H1 (cell line): ENCODE measurements at regions of chr12 and their contacts with region 1.

Region 1: GRCh38 chr12:2812290-2813213 is at the start of gene ITFG2:
- DNase-seq: peak; percentile 96
- H3K4me3 ChIP-seq: peak within 1 kb of the TSS; percentile 52 to 94 (median 72)
- H3K27ac ChIP-seq: peak within 1 kb of the TSS; percentile 97
- H3K4me1 ChIP-seq: peaks cover 0 to 3% (median 0%) of the 10 kb centered on the region in 4 experiments; a peak in 3 of 7 replicates
- H3K27me3 ChIP-seq: no peaks in the 10 kb centered on the region
- CTCF ChIP-seq: no peak
- EP300 ChIP-seq: peak in 1 of 2 experiments; percentile 37; a peak in 1 of 3 replicates
- POLR2A ChIP-seq: peak; percentile 91 to 99
- RAD21 ChIP-seq: no peak
- total RNA-seq, gene ITFG2: 22.9 and 23.0 TPM in 2 replicates

Region 2: DNA sequence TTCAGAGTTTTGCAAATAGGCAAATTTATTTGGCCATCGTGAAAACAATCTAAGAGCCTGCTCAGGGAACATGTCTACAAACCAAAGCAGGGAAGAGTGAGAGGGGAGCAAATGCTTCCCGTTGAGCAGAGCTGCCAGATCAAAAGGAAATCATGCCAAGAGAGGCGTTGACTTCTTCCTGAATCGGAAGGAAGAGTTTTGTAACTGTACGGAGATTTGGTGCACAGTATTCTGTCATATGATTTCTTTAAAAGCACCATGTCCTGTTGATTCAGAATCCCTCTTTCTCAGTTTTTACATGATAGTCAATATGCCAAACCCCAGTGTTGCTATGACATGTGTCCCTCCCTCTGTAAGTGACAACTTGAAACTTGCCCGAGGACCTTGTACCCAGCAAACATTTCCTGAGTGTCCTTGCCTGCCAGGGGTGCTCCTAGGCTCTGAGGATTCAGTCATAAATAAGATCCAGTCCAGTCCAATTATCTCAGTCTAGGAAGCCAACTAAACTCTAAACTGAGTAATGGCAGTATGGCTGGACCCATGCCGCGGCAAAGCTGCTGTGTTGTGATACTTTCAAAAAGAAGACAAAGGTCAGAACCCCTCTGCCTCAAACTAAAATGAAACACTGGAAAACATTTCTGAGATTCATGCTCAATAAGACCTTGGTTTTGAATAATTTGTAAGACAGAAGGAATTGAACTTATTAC is 317.9 kb before region 1 on chr12:
- CTCF ChIA-PET with region 1: no interaction called
- POLR2A ChIA-PET with region 1: no interaction called
- DNase-seq: no peak
- H3K4me3 ChIP-seq: no peak overlapping the region
- H3K27ac ChIP-seq: no peak overlapping the region
- H3K4me1 ChIP-seq: no peaks in the 10 kb centered on the region
- H3K27me3 ChIP-seq: no peaks in the 10 kb centered on the region; a peak in 1 of 7 replicates
- CTCF ChIP-seq: no peak
- EP300 ChIP-seq: no peak
- POLR2A ChIP-seq: no peak
- RAD21 ChIP-seq: no peak

Region 3: GRCh38 chr12:2739817-2740641 is 72.5 kb before region 1 on chr12:
- CTCF ChIA-PET with region 1: interaction called, 10 read pairs
- POLR2A ChIA-PET with region 1: interaction called, 7 read pairs
- DNase-seq: no peak
- H3K4me3 ChIP-seq: no peak overlapping the region
- H3K27ac ChIP-seq: no peak overlapping the region
- H3K4me1 ChIP-seq: peaks cover 0 to 3% (median 0%) of the 10 kb centered on the region in 4 experiments; a peak in 3 of 7 replicates
- H3K27me3 ChIP-seq: peaks cover 0 to 3% (median 0%) of the 10 kb centered on the region in 4 experiments; a peak in 1 of 7 replicates
- CTCF ChIP-seq: peak in 2 of 3 experiments; percentile 71 to 83; a peak in 3 of 4 replicates
- EP300 ChIP-seq: no peak
- POLR2A ChIP-seq: no peak
- RAD21 ChIP-seq: peak; percentile 86 to 93

Region 4: DNA sequence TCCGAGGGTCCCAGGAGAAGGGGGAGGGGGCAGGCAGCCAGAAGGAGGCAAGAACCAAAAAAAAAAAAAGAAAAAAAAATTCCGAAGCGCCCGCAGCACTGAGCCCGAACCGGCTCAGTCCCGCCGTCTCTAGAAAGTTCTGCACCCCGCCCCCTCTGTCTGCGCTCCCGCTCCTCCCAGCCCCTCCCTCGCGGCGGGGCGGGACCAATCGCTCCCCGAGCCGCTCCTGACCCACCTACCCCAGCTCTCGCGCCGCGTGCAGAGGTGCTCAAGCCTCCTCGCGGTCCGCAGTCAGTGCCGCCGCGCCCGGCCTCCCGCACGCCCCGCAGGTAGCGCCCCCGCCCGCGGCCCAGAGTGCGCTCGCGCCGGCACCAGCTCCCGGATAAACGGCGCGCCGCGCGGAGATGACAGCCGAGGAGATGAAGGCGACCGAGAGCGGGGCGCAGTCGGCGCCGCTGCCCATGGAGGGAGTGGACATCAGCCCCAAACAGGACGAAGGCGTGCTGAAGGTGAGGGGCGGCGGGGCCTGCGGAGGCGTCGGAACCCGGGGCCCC is 17.7 kb before region 1 on chr12 and contains the start of gene FKBP4:
- CTCF ChIA-PET with region 1: interaction called, 7 read pairs
- POLR2A ChIA-PET with region 1: interaction called, 54 read pairs
- DNase-seq: peak; percentile 63 to 89
- H3K4me3 ChIP-seq: peak within 1 kb of the TSS; percentile 59 to 73 (median 66)
- H3K27ac ChIP-seq: no peak within 1 kb of the TSS
- H3K4me1 ChIP-seq: peaks cover 4 to 6% (median 5%) of the 10 kb centered on the region in 4 experiments; a peak in 5 of 7 replicates
- H3K27me3 ChIP-seq: peaks cover 0 to 6% (median 4%) of the 10 kb centered on the region in 4 experiments; a peak in 6 of 7 replicates
- CTCF ChIP-seq: no peak
- EP300 ChIP-seq: 0 out of 3 replicates have a peak, but pooled peaks of 1 of the 2 experiments have one; percentile 18
- POLR2A ChIP-seq: peak; percentile 38 to 73
- RAD21 ChIP-seq: no peak
- total RNA-seq, gene FKBP4: 227 and 243 TPM in 2 replicates

Region 5: DNA sequence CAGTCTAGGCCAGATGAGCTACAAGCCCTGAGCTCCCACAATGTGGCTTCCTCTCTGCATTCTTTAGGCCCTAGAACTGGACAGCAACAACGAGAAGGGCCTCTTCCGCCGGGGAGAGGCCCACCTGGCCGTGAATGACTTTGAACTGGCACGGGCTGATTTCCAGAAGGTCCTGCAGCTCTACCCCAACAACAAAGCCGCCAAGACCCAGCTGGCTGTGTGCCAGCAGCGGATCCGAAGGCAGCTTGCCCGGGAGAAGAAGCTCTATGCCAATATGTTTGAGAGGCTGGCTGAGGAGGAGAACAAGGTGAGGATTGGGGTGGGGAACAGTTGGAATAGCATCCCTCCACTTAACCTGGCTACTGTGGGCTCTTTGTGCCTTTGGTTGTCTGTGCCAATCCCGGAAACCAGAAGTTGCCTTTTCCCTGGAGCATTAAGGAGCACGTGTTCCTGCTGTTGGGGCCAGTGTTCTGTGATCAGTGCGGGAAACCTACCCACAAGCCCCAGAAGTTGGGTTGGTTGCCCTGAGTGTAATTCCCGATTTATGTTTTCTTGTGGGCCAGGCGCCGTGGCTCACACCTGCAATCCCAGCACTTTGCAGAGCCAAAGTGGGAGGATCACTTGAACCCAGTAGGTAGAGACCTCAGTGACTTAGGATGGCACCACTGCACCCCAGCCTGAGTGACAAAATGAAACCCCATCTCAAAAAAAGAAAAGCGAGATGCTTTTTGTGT is 11.3 kb before region 1 on chr12:
- CTCF ChIA-PET with region 1: interaction called, 7 read pairs
- POLR2A ChIA-PET with region 1: interaction called, 54 read pairs
- DNase-seq: no peak
- H3K4me3 ChIP-seq: no peak overlapping the region
- H3K27ac ChIP-seq: no peak overlapping the region
- H3K4me1 ChIP-seq: no peaks in the 10 kb centered on the region; a peak in 1 of 7 replicates
- H3K27me3 ChIP-seq: no peaks in the 10 kb centered on the region
- CTCF ChIP-seq: no peak
- EP300 ChIP-seq: no peak
- POLR2A ChIP-seq: no peak
- RAD21 ChIP-seq: no peak

Region 6: GRCh38 chr12:2826721-2827515 is 14.4 kb after region 1 on chr12:
- CTCF ChIA-PET with region 1: interaction called, 19 read pairs
- POLR2A ChIA-PET with region 1: interaction called, 24 read pairs
- DNase-seq: no peak
- H3K4me3 ChIP-seq: no peak overlapping the region
- H3K27ac ChIP-seq: no peak overlapping the region
- H3K4me1 ChIP-seq: peaks cover 3 to 15% (median 8%) of the 10 kb centered on the region in 4 experiments; a peak in 6 of 7 replicates
- H3K27me3 ChIP-seq: no peaks in the 10 kb centered on the region
- CTCF ChIP-seq: no peak
- EP300 ChIP-seq: no peak
- POLR2A ChIP-seq: no peak
- RAD21 ChIP-seq: no peak

Region 7: DNA sequence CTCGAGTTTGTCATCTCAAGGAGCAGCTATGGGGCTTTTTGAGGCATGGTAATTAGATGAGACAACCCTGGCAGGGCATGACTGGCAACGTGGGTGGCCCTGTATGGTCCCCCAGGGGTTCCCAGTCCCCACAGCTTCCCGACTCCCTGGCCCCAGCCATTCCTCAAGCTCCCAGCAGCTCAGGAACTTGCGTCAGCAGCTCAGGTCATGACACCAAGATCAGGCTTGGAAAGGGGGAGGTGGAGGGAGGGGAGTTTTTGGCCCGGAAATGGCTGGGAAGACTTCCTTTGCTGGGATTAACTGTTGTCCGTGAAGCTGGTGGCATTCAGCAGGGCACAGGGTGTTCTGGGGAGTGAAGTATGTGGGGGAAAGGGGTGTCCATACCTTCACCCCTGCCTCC is 32.7 kb after region 1 on chr12:
- CTCF ChIA-PET with region 1: interaction called, 4 read pairs
- POLR2A ChIA-PET with region 1: interaction called, 10 read pairs
- DNase-seq: no peak
- H3K4me3 ChIP-seq: no peak overlapping the region
- H3K27ac ChIP-seq: no peak overlapping the region
- H3K4me1 ChIP-seq: peaks cover 0 to 4% (median 3%) of the 10 kb centered on the region in 4 experiments; a peak in 6 of 7 replicates
- H3K27me3 ChIP-seq: no peaks in the 10 kb centered on the region
- CTCF ChIP-seq: no peak
- EP300 ChIP-seq: no peak
- POLR2A ChIP-seq: no peak
- RAD21 ChIP-seq: no peak